ENCODE measurements at regions of chr7 and their contacts with region 1.

Region 1: GRCh38 chr7:22559829-22560489 is 60.0 kb upstream of the STEAP1B start:
- DNase-seq: peak; percentile 78 to 83
- ATAC-seq: peak; percentile 86
- H3K4me3 ChIP-seq: no peak overlapping the region
- H3K27ac ChIP-seq: no peak overlapping the region
- H3K4me1 ChIP-seq: peaks cover 4 to 5% of the 10 kb centered on the region in 2 donors
- H3K27me3 ChIP-seq: no peaks in the 10 kb centered on the region

Region 2: GRCh38 chr7:22433710-22434460 is 126.1 kb before region 1 on chr7:
- intact Hi-C with region 1: no loop called
- DNase-seq: no peak
- ATAC-seq: no peak
- H3K4me3 ChIP-seq: no peak overlapping the region
- H3K27ac ChIP-seq: no peak overlapping the region
- H3K4me1 ChIP-seq: no peaks in the 10 kb centered on the region
- H3K27me3 ChIP-seq: no peaks in the 10 kb centered on the region

Region 3: DNA sequence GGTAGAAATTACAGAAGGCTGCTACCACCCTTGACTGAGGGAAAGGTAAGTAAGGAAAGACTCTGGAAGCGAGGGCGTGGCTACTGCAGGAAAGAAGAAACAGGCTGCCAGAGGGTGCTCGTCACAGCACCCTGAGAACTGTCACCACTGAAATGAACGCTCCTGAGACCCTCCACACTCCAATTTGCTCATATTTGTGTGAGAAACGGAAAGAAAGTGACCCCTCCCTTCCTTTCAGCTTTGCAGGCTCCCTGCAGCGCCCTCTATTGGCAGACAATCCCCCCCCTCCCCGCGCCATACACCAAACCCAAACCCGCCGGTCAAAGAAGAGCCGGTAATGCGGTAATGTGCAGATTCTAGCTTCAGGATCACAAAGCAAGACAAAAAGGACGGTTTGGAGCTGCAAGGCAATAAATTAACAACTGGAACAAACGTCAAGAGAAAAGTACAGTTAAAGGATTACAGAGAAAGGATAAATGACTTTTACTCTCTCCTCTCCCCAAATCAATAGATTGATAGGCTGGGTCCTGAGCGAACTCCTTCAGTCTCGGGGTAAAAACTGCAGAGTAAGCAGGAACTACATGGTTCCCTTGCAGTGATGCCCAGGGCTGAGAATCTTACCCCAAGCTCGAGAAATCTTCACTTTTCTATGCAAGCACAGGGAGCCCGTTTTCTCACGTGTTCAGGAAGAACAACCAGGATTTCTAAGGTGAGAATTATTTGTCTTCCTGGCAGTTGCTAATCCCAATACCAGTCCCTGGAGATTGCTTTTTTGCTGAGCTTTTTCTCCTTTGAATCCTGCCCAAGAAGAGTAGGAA is 107.6 kb before region 1 on chr7:
- intact Hi-C with region 1: no loop called
- DNase-seq: no peak
- ATAC-seq: peak; percentile 63
- H3K4me3 ChIP-seq: no peak overlapping the region
- H3K27ac ChIP-seq: no peak overlapping the region
- H3K4me1 ChIP-seq: no peaks in the 10 kb centered on the region
- H3K27me3 ChIP-seq: no peaks in the 10 kb centered on the region

Region 4: DNA sequence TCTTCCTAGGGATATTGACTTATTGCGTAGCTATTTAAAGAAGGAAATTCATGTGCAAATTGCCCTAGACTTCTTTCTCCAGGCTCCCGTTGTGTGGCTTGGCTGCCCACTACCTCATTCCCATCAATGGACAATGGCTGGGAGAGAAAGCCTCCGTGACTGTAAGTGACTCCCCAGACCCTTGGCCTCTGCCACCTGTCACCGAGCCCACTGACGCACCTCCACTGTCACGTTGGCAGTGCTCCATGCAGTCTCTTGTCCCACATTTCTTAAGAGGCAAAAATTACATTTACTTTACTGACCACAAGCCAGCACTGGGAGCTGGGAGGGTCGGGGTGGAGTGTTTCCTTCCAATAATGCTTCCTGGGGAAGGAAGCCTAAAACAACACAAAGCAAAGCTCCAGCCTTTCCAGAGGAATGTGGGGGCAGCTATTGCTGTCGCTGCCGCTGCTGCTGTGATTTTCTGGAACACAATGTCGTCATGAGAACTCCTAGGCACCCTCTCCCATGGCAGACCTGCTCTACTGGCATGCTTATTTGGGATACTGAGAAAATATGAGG is 29.8 kb after region 1 on chr7:
- intact Hi-C with region 1: loop called in 1 of 2 experiments (anchors 2 kb)
- DNase-seq: peak; percentile 84 to 90
- ATAC-seq: peak; percentile 88
- H3K4me3 ChIP-seq: peak overlapping the region in 1 of 2 donors; percentile 9
- H3K27ac ChIP-seq: peak overlapping the region; percentile 39 to 61
- H3K4me1 ChIP-seq: peaks cover 2 to 7% of the 10 kb centered on the region in 2 donors
- H3K27me3 ChIP-seq: no peaks in the 10 kb centered on the region

Region 5: GRCh38 chr7:22617166-22617565 is 57.2 kb after region 1 on chr7:
- intact Hi-C with region 1: no loop called
- DNase-seq: peak in 1 of 2 donors; percentile 42
- ATAC-seq: no peak
- H3K4me3 ChIP-seq: no peak overlapping the region
- H3K27ac ChIP-seq: no peak overlapping the region
- H3K4me1 ChIP-seq: no peaks in the 10 kb centered on the region
- H3K27me3 ChIP-seq: no peaks in the 10 kb centered on the region

Region 6: DNA sequence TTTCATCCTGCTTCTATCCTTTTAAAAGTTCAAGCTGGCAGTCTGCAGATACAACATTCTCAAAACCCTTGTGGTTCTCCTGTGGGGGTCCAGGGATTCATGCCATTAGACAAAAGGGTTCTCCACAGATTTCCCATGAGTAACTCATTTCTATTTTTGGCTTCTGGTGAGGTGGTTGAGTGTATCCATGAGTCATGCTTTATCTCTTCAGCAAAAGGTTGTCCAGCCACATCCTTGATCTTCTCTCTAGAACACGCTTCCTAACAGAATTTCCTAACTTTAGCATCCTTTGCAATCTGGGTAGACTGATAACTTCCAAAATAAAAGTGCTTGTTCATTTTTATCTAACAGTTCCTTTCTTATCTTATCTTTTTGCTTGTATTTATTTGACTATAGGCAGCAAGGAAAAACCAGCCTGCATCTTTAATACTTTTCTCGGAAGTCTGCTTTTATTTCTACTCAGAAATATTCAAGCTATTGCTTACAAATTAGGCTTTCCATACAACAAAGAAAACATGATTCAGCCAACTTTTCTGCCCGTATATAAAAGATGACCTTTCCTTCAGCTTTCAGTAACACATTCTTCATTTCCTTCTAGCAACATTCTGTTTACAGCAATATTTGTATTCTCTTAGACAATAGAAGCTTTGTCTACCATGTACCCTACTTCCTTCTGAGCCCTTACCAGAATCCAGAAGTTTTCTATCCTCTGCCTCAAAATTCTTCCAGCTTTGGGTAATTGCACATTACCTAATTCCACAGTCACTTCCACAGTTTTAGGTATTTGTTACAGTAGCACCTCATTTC is 87.7 kb after region 1 on chr7:
- intact Hi-C with region 1: no loop called
- DNase-seq: no peak
- ATAC-seq: no peak
- H3K4me3 ChIP-seq: no peak overlapping the region
- H3K27ac ChIP-seq: no peak overlapping the region
- H3K4me1 ChIP-seq: no peaks in the 10 kb centered on the region
- H3K27me3 ChIP-seq: no peaks in the 10 kb centered on the region

Region 7: DNA sequence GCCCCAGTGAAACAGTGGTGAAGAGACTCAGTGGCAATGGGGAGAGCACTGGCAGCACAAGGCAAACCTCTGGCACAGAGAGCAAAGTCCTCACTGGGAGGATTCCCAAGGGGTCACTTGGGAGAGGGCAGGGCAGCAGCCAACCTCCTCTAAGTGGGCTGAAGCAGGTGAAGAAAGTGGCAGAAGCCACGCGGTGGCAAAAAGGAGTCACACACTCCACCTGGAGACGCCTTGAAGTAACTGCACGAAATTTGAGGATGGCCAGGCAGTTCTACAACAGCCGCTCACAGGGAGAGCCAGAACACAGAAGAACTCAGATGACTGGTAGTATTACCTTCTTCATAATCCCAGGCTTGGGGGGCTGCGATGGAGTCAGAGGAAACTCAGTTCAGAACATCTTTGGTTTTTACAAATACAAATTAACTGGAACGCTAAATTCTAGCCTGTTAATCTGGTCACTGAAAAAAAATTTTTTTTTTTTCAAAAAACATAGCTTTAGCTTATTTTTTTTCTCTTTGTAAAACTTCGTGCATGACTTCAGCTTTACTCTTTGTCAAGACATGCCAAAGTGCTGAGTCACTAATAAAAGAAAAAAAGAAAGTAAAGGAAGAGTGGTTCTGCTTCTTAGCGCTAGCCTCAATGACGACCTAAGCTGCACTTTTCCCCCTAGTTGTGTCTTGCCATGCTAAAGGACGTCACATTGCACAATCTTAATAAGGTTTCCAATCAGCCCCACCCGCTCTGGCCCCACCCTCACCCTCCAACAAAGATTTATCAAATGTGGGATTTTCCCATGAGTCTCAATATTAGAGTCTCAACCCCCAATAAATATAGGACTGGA is 166.6 kb after region 1 on chr7:
- intact Hi-C with region 1: loop called (anchors 2 kb)
- DNase-seq: peak in 1 of 2 donors; percentile 61
- ATAC-seq: peak; percentile 80
- H3K4me3 ChIP-seq: peak overlapping the region in 1 of 2 donors; percentile 15
- H3K27ac ChIP-seq: peak overlapping the region in 1 of 2 donors; percentile 0
- H3K4me1 ChIP-seq: no peaks in the 10 kb centered on the region
- H3K27me3 ChIP-seq: no peaks in the 10 kb centered on the region

Region 8: GRCh38 chr7:22782616-22783232 is 222.8 kb after region 1 on chr7:
- intact Hi-C with region 1: loop called (anchors 1 to 2 kb)
- DNase-seq: peak; percentile 80 to 86
- ATAC-seq: no peak
- H3K4me3 ChIP-seq: no peak overlapping the region
- H3K27ac ChIP-seq: no peak overlapping the region
- H3K4me1 ChIP-seq: no peaks in the 10 kb centered on the region
- H3K27me3 ChIP-seq: no peaks in the 10 kb centered on the region

Region 9: GRCh38 chr7:22854158-22855048 is 294.4 kb after region 1 on chr7:
- intact Hi-C with region 1: loop called in 1 of 2 experiments (anchors 10 kb)
- DNase-seq: peak; percentile 95 to 96
- ATAC-seq: peak; percentile 92
- H3K4me3 ChIP-seq: peak overlapping the region; percentile 61 to 66
- H3K27ac ChIP-seq: peak overlapping the region; percentile 15 to 66
- H3K4me1 ChIP-seq: peaks cover 0 to 3% of the 10 kb centered on the region in 2 donors
- H3K27me3 ChIP-seq: no peaks in the 10 kb centered on the region

Measured in aorta (tissue), 5 donors.